Right lobe of liver (tissue), 6 donors: ENCODE measurements at regions of chr1 and their contacts with region 1.

Region 1: DNA sequence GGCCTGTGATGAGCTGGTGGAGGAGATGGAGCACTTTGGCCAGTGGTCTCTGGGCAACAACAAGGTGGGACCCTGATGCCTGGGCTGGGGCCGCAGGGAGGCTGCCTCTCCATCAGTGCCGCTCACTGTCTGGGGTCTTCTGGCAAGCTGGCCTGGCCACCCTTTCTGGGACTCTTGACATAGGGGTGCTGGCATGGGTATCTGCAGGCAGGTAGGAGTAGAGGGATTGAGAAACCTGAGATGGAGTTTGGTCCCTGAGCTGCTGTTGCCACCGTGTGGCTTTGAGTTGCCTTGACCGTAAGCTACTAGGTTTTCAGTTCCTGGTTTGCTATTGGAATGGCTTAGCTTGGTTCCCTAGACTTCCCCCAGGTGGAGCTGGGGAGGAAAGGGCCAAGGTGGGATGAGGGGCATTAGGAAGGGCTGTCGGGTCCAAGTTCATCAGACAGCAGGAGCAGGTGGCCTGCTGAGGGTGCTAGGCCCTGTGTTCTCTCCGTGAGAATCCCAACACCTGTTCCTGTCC is 13.2 kb upstream of the MFN2 start:
- DNase-seq: peak in 1 of 3 donors; percentile 65
- ATAC-seq: peak; percentile 92 to 98 (median 96)
- H3K4me3 ChIP-seq: no peak overlapping the region
- H3K27ac ChIP-seq: no peak overlapping the region
- H3K4me1 ChIP-seq: no peaks in the 10 kb centered on the region
- H3K27me3 ChIP-seq: no peaks in the 10 kb centered on the region
- CTCF ChIP-seq: peak; percentile 70 to 78 (median 72)
- POLR2A ChIP-seq: no peak

Region 2: DNA sequence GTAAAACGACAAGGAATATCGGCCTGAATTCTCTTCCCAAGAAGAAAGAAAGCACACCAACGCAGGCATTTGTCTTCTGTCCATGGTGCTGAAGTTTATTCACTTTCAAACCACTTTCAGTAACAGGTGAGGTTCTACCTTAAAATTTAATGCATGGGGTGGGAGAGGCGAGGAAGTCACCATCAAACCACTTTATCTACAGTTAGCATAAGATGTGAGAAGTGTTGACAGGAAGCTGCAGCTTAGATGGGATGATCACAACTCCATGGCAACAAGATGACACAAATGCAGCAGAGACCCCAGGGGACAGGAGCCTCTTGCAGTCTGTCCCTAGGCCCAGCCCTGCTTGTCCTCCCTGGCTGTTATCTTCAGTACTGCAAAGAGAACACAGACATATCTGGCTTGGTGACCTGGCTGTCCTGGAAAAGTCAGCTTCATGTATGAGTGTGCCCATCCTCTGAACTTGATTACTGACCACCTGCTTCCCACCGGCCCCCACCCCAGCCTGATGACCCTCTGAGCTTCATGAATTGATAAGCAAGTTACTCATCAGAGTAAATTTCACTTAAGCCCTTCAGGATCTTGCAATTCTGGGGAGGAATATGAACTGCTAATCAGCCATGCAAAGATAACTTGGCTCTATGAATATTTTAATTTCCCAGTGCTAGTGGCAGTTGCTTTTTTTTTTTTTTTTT is 121.3 kb before region 1 on chr1:
- intact Hi-C with region 1: no loop called
- DNase-seq: no peak
- ATAC-seq: no peak
- H3K4me3 ChIP-seq: no peak overlapping the region
- H3K27ac ChIP-seq: no peak overlapping the region
- H3K4me1 ChIP-seq: peaks cover 0 to 30% (median 14%) of the 10 kb centered on the region in 4 donors
- H3K27me3 ChIP-seq: no peaks in the 10 kb centered on the region
- CTCF ChIP-seq: no peak
- POLR2A ChIP-seq: no peak

Region 3: GRCh38 chr1:11918779-11919519 is 48.1 kb before region 1 on chr1:
- intact Hi-C with region 1: loop called (anchors 10 kb)
- DNase-seq: no peak
- ATAC-seq: no peak
- H3K4me3 ChIP-seq: no peak overlapping the region
- H3K27ac ChIP-seq: no peak overlapping the region
- H3K4me1 ChIP-seq: peaks cover 0 to 28% (median 5%) of the 10 kb centered on the region in 4 donors
- H3K27me3 ChIP-seq: no peaks in the 10 kb centered on the region
- CTCF ChIP-seq: no peak
- POLR2A ChIP-seq: no peak